ENCODE measurements at regions of chr1 and their contacts with region 1.

Region 1: DNA sequence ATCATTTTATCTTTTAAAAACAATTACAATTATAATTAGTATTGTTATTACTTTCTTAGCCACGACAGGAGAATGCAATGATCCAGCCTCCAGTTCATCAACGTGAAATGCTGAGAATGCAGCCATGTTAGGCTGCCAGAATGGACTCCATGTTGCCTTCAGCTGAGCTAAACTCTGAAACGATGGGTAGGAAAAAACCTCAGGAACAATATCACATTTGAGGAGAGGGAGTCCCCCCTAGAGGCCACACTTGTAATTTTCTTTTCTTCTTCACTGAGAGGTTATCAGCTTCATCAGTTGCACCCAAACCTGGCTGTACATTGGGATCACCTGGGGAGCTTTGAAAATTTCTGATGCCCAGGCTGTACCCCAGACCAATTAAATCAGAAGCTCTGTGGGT is 34.6 kb upstream of the DNAH14 start:
- DNase-seq: peak; percentile 10
- H3K4me3 ChIP-seq: no peak overlapping the region
- H3K27ac ChIP-seq: no peak overlapping the region
- H3K27me3 ChIP-seq: peaks cover 2% of the 10 kb centered on the region
- CTCF ChIP-seq: peak; percentile 57

Region 2: GRCh38 chr1:224856973-224857372 is 37.9 kb before region 1 on chr1:
- CTCF ChIA-PET with region 1: interaction called, 22 read pairs
- POLR2A ChIA-PET with region 1: no interaction called
- DNase-seq: no peak
- H3K4me3 ChIP-seq: no peak overlapping the region
- H3K27ac ChIP-seq: no peak overlapping the region
- H3K27me3 ChIP-seq: peaks cover 7% of the 10 kb centered on the region
- CTCF ChIP-seq: no peak

Region 3: DNA sequence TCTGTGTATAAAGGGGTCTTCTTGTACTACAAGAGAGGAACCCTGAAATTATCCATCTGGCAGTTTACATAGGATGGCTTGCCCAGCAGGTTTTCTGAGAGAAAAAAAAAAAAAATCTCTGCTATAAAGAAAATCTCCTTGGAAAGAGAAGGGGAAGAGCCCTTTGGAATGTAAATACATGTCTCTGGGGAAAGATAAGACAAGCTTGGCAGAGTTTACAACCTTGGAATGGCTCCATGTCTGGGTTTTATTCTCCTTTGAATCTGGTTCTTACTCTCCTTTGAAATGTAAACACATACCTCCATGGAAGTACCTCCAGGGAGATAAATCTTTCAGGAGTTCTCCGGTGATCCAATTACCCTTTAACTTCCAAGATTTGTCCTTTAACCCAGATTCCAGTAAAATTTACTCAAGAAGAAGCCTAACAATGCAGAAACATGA is 10.5 kb before region 1 on chr1:
- CTCF ChIA-PET with region 1: interaction called, 22 read pairs
- POLR2A ChIA-PET with region 1: no interaction called
- DNase-seq: peak; percentile 41
- H3K4me3 ChIP-seq: no peak overlapping the region
- H3K27ac ChIP-seq: no peak overlapping the region
- H3K27me3 ChIP-seq: peaks cover 22% of the 10 kb centered on the region
- CTCF ChIP-seq: no peak

Region 4: DNA sequence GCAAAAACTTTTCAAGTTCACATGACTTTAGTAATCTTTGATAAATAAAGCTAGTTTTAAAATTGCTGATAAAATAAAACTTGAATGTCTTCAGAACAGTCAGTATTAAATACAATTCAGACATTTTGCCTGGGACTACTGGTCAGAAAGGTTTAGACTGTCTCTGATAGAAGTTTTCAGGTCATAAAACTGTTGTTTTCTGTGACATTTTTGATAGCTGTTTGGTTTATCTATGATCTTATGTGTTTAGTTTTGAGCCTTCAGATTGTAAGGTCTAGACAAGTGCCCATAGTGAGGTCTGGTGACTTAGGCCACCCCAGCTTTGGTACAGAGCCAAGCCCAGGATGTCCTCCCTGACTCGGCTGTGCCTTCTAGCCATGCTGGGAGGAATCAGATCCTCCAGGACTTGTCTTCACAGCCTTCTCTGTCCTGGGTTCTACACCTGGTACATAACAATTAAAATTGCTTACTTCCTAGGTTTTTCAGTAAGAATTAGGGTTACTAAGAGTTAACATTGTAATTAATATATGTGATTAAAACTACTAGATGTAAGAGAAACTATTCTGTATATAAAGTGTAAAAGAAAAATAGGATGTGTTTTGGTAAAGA is 19.5 kb after region 1 on chr1:
- CTCF ChIA-PET with region 1: interaction called, 13 read pairs
- POLR2A ChIA-PET with region 1: no interaction called
- DNase-seq: no peak
- H3K4me3 ChIP-seq: no peak overlapping the region
- H3K27ac ChIP-seq: no peak overlapping the region
- H3K27me3 ChIP-seq: peaks cover 3% of the 10 kb centered on the region
- CTCF ChIP-seq: no peak

Measured in AG04450 (cell line).